ENCODE measurements at regions of chrX and their contacts with region 1.

Region 1: DNA sequence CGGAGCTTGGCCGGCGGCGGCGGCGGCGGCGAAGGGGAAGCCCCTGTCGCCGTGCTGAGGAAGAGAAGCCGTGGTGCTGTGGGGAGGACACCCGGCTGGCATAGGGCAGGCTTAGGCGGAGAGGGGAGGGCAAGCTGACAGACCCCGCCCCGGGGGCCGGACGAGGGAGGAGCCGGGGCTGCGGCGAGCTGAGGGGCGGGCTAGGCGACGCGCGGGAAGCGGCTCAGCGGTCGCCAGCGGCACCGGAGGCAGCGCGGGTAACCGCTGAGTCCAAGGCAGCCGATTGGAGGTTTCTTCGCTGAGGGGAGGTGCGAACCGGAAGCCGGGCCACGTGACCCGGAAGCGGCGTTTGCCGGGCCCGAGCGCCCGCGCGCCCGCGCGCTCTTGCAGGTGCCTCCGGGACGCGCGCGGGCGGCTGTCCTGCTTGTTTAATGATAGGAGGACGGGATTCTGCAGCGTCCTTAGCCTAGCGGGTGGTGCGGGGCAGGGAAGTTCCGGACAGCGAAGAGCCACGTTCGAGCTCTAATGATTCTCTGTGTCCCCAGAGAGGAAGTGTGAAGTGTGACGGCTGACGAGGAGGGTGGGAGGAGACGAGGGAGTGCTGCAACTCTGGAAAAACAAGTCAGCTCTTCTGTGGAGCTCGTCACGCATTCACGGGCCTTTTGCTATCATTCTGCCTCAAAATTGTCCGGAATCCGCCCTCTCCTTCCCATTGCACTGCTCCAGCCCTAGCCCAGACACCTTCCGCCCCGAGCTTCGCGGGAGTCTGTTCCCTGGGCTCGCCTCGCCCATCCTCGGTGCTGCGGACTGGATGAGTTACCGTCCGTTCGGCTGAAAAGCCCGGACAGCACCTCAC is at the start of gene AP1S2:
- DNase-seq: peak; percentile 98
- H3K4me3 ChIP-seq: peak within 1 kb of the TSS; percentile 67 to 90 (median 73)
- H3K27ac ChIP-seq: peak within 1 kb of the TSS; percentile 32
- H3K4me1 ChIP-seq: peaks cover 15% of the 10 kb centered on the region
- H3K27me3 ChIP-seq: no peaks in the 10 kb centered on the region
- CTCF ChIP-seq: no peak
- total RNA-seq, gene AP1S2: 15.8 to 21.6 TPM

Region 2: DNA sequence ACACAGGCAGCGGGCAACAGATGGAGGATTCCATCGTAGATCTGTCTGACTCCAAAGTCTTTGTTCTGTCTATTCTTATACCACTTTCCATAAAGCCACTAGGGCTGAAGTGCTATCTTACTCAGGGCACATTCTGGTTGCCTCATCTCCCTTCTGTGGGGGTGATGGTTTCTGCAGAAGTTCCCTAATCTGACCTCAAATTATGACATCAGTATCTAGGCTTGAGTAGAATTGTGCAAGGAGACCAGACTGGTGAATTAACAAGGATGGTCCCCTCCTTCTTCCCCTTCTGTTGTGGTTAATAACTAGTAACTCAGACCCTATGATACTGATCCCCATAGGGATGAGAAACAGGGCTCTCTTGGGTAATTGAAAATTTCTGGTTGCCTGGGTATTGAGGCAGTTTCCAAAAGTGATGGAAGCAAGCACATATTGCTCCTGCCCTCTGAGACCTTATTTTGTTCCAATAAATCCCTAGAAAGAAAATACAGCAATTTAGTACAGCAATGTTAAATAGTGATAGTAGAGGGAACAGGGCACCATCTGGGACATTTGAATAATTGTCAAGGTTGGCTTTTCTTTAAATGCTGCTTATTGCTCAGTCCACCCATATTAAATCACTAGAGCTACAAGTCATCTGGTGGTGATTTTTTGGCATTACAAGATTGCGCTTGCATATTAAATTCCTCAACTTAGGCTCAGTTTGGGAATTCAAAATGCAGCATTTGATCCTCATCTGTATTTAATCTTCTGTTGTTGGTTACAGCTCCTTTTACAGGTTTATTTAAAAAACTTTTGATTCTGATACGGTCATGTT is 57.0 kb after region 1 on chrX:
- CTCF ChIA-PET with region 1: no interaction called
- dilution Hi-C with region 1: no loop called
- in situ Hi-C with region 1: no loop called
- intact Hi-C with region 1: loop called (anchors 5 kb)
- DNase-seq: no peak
- H3K4me3 ChIP-seq: no peak overlapping the region
- H3K27ac ChIP-seq: no peak overlapping the region
- H3K4me1 ChIP-seq: no peaks in the 10 kb centered on the region
- H3K27me3 ChIP-seq: no peaks in the 10 kb centered on the region
- CTCF ChIP-seq: peak in 1 of 2 donors; percentile 18

Region 3: DNA sequence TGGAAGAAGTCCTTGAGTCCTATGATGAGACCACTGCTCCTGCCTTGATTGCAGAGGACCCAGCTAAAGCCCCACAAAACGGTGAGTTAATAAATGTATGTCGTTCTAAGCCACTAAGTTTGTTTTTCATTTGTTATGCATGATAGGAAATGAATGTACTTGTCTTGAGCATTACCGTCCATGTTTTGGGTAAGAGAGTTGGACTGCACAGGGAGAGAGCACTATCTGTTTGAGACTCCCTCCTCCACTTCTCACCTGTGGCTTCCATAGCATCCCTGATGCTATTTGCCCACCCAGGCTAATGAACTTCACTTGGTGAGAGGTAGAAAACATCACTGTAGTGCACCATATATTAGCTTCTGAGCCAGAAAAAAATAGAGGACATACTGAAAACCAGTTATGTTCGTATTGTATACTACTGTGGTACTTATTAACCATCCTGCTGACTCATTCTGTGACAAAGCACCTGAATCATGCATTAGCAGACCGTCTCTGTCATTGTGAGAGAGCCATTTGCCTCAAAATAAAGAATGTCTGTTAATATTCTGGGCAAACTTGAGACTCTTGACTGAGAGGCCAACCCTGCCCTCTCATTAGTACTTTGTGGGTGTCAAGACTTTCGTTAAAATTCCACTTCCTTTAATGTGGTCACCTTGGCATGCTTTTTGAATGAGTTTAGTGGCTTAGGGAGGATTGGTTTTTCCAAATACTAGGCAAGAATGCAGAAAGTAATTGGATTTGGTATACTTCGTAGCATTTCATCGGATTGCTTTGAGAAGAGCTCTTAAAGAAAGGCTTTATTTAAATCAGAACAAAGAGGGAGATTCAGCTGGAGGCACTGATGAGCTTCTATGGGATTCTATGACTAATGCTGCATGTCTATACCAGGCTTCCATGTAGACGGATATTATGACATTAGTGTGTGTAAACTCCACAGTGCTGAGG is 169.1 kb after region 1 on chrX:
- CTCF ChIA-PET with region 1: interaction called, 10 read pairs
- dilution Hi-C with region 1: no loop called
- in situ Hi-C with region 1: no loop called
- intact Hi-C with region 1: no loop called
- DNase-seq: peak; percentile 80
- H3K4me3 ChIP-seq: no peak overlapping the region
- H3K27ac ChIP-seq: peak overlapping the region; percentile 80
- H3K4me1 ChIP-seq: peaks cover 34% of the 10 kb centered on the region
- H3K27me3 ChIP-seq: no peaks in the 10 kb centered on the region
- CTCF ChIP-seq: no peak

Measured in mammary epithelial cell (primary cell).